ENCODE measurements at regions of chr17 and their contacts with region 1.

Region 1: GRCh38 chr17:35981908-35982330 is 622 bp upstream of the CCL16 start:
- DNase-seq: no peak

Region 2: GRCh38 chr17:35809855-35810461 is 172.0 kb before region 1 on chr17:
- CTCF ChIA-PET with region 1: no interaction called
- POLR2A ChIA-PET with region 1: no interaction called
- DNase-seq: no peak

Region 3: GRCh38 chr17:35889818-35890763 is 91.8 kb before region 1 on chr17:
- CTCF ChIA-PET with region 1: no interaction called
- POLR2A ChIA-PET with region 1: no interaction called
- DNase-seq: no peak

Region 4: GRCh38 chr17:36001862-36002603 is 20.1 kb after region 1 on chr17:
- CTCF ChIA-PET with region 1: no interaction called
- POLR2A ChIA-PET with region 1: no interaction called
- DNase-seq: no peak

Region 5: GRCh38 chr17:36072431-36073121 is 90.7 kb after region 1 on chr17:
- CTCF ChIA-PET with region 1: interaction called, 12 read pairs
- POLR2A ChIA-PET with region 1: no interaction called
- DNase-seq: peak; percentile 68

Measured in HEK293T (cell line).